HEK293 (cell line): ENCODE measurements at regions of chr21 and their contacts with region 1.

Region 1: GRCh38 chr21:44299458-44300261 is at the start of gene PFKL:
- H3K4me3 ChIP-seq: peak within 1 kb of the TSS; percentile 64
- H3K27ac ChIP-seq: peak within 1 kb of the TSS; percentile 81
- H3K4me1 ChIP-seq: peaks cover 8% of the 10 kb centered on the region; the same call in 1 of the 2 replicates
- CTCF ChIP-seq: peak; percentile 20; the same call in 1 of the 2 replicates

Region 2: DNA sequence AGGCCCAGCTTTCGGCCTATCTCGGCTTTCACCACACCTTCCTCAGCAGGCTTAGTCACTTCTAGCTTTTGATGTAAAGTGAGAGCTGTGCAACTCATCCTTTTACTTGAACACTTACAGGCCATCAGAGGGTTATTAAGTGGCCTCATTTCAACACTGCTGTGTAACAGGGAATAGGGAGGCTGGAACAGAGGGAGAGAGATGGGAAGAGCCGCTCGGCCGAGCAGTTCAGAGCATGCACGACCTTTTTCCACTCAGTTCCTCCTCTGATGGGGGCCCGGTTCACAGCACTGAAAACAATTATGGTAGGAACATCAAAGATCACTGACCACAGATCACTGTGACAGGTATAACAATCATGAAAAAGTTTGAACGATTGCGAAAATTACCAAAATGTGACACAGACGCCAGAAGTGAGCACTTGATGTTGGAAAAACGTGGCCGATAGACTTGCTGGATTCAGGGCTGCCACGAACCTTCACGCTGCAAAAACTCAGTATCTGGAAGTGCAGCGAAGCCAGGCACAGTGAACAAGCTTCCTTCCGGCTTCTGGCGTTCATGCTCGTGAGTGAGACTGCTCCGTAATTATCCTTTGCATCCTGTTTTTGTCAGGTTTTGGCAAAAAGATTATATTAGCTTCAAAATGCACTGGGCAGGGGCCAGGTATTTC is 406.0 kb before region 1 on chr21:
- CTCF ChIA-PET with region 1: no interaction called
- POLR2A ChIA-PET with region 1: no interaction called
- H3K4me3 ChIP-seq: no peak overlapping the region
- H3K27ac ChIP-seq: peak overlapping the region; percentile 25; the same call in 1 of the 2 replicates
- H3K4me1 ChIP-seq: peaks cover 8% of the 10 kb centered on the region; the same call in 1 of the 2 replicates
- CTCF ChIP-seq: no peak

Region 3: GRCh38 chr21:44286833-44287681 is 12.6 kb before region 1 on chr21:
- CTCF ChIA-PET with region 1: interaction called, 14 read pairs
- POLR2A ChIA-PET with region 1: no interaction called
- H3K4me3 ChIP-seq: no peak overlapping the region
- H3K27ac ChIP-seq: no peak overlapping the region
- H3K4me1 ChIP-seq: no peaks in the 10 kb centered on the region
- CTCF ChIP-seq: no peak

Region 4: DNA sequence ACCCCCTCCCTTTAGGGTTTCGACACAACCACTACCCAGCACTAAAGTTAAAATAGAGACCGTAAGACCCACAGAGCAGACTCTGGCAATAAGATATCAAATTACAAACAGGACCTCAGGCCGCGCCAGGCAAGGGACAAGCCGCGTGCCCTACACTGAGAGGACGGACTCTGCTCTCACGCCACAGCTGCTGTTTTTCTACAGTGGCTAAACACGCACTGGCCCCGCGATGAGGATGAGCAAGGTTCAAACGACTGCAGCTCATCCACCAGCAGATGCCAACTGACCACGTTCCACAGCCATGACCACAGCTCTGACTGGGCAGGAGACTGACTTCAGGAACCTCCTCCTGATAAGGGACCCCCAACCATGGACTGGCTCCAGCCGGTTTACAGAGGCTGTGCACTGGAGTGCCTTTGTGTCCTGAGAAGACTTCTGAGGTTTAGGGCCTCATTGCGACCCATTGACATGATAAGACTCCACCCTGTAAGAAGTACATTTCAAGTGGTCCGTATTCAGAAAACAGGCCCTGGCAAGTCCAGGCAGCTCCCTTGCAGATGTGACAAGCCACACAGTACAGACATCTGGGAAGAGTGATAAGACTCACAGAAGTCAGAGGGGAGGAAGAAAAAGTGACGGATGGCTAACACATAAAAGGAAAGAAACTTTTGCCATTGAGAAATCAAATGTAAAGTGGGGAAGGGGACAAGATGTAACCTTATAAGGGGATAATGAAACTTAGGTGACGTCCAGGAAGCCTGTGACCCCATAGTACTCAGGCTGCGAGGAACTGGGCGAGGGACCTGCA is 294.1 kb after region 1 on chr21:
- CTCF ChIA-PET with region 1: no interaction called
- POLR2A ChIA-PET with region 1: no interaction called
- H3K4me3 ChIP-seq: no peak overlapping the region
- H3K27ac ChIP-seq: no peak overlapping the region
- H3K4me1 ChIP-seq: no peaks in the 10 kb centered on the region
- CTCF ChIP-seq: no peak